ENCODE measurements at regions of chr2 and their contacts with region 1.

Region 1: DNA sequence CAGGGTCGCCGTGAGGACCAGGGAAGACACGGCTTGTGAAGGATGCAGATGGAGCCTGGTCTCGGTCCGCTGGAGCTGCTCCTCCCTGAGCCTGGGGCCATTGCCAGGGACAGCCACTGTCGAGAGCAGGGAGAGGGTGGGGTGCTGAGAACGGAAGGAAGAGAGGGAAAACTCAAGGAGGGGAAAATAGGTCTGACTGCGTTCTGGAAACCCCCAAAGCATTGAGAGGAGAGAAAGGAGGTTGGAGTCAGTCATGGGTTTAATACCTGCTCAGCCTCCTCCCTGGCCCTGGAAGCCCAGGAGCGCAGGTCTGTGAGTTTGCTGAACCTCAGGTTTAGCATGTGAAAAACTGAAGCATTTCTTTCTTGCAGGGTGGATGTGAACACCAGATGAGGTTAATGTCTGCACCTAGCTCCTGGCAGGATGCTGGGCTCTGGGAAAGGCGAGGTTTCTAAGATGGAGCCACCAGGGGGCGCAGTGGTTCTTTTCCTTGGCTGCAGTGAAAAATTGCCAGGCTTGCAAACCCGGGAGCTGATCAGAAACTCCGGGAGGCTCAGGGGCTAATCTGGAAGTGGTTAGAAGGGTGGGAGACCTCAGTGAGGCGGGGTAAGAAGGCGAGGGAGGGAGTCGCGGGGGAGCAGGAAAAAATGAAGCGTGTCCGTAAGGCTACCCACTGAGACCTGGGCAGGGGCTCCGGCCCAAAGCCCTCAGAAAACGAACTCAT is 33.6 kb upstream of the RNF149 start:
- DNase-seq: peak; percentile 68
- H3K4me3 ChIP-seq: no peak overlapping the region
- H3K27ac ChIP-seq: no peak overlapping the region
- H3K4me1 ChIP-seq: peaks cover 9% of the 10 kb centered on the region
- H3K27me3 ChIP-seq: no peaks in the 10 kb centered on the region
- CTCF ChIP-seq: peak; percentile 75 to 87
- POLR2A ChIP-seq: no peak

Region 2: GRCh38 chr2:101308432-101309210 is 33.4 kb before region 1 on chr2 and contains the start of gene RNF149:
- CTCF ChIA-PET with region 1: interaction called, 23 read pairs
- POLR2A ChIA-PET with region 1: no interaction called
- dilution Hi-C with region 1: no loop called
- intact Hi-C with region 1: loop called (anchors 1 kb)
- DNase-seq: peak; percentile 94
- H3K4me3 ChIP-seq: peak within 1 kb of the TSS; percentile 68 to 84 (median 82)
- H3K27ac ChIP-seq: peak within 1 kb of the TSS; percentile 83
- H3K4me1 ChIP-seq: peaks cover 23% of the 10 kb centered on the region
- H3K27me3 ChIP-seq: no peaks in the 10 kb centered on the region
- CTCF ChIP-seq: no peak
- POLR2A ChIP-seq: peak; percentile 95
- total RNA-seq, gene RNF149: 57.6 and 66.6 TPM in 2 replicates

Region 3: DNA sequence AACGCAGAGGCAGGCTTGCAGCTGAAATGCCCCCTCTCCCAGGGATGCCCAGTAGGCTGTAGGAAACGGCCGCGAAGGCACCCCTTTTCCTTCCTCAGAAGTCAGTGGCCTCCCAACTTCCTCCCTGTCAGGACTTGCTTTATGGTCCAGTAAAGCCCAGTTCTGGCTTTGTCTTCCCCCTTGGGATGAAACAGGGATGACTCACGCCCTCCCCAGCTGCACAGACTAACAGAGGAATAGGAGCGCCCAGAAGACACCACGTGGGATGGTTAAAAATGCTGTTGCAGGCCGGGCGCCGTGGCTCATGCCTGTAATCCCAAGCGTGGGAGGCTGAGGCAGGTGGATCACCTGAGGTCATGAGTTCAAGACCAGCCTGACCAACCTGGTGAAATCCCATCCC is 38.3 kb after region 1 on chr2:
- CTCF ChIA-PET with region 1: interaction called, 41 read pairs
- POLR2A ChIA-PET with region 1: no interaction called
- dilution Hi-C with region 1: no loop called
- intact Hi-C with region 1: no loop called
- DNase-seq: peak; percentile 57
- H3K4me3 ChIP-seq: no peak overlapping the region
- H3K27ac ChIP-seq: no peak overlapping the region
- H3K4me1 ChIP-seq: peaks cover 8% of the 10 kb centered on the region
- H3K27me3 ChIP-seq: peaks cover 11 to 12% of the 10 kb centered on the region in 2 experiments
- CTCF ChIP-seq: no peak
- POLR2A ChIP-seq: no peak

Region 4: GRCh38 chr2:101410716-101411211 is 68.7 kb after region 1 on chr2:
- CTCF ChIA-PET with region 1: interaction called, 55 read pairs
- POLR2A ChIA-PET with region 1: no interaction called
- dilution Hi-C with region 1: no loop called
- intact Hi-C with region 1: no loop called
- DNase-seq: no peak
- H3K4me3 ChIP-seq: no peak overlapping the region
- H3K27ac ChIP-seq: no peak overlapping the region
- H3K4me1 ChIP-seq: no peaks in the 10 kb centered on the region
- H3K27me3 ChIP-seq: peaks cover 0 to 15% of the 10 kb centered on the region in 2 experiments
- CTCF ChIP-seq: no peak
- POLR2A ChIP-seq: no peak

Region 5: DNA sequence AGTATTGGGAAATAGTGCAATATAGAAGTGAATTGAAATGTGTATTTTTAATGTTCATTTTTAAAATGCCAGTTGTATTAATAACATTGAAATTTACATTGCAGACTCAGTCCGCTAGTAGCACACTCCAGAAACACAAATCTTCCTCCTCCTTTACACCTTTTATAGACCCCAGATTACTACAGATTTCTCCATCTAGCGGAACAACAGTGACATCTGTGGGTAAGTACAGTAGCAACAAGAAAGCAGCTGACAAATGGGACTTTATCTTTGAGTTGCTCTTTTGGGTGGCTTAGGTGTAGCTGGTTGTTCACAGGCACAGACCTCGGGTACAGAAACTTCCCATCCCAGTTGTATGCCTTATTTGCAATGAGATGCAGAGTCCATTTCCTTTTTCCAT is 531.5 kb after region 1 on chr2:
- CTCF ChIA-PET with region 1: interaction called, 12 read pairs
- POLR2A ChIA-PET with region 1: no interaction called
- dilution Hi-C with region 1: no loop called
- intact Hi-C with region 1: no loop called
- DNase-seq: no peak
- H3K4me3 ChIP-seq: no peak overlapping the region
- H3K27ac ChIP-seq: no peak overlapping the region
- H3K4me1 ChIP-seq: no peaks in the 10 kb centered on the region
- H3K27me3 ChIP-seq: no peaks in the 10 kb centered on the region
- CTCF ChIP-seq: no peak
- POLR2A ChIP-seq: no peak

Region 6: DNA sequence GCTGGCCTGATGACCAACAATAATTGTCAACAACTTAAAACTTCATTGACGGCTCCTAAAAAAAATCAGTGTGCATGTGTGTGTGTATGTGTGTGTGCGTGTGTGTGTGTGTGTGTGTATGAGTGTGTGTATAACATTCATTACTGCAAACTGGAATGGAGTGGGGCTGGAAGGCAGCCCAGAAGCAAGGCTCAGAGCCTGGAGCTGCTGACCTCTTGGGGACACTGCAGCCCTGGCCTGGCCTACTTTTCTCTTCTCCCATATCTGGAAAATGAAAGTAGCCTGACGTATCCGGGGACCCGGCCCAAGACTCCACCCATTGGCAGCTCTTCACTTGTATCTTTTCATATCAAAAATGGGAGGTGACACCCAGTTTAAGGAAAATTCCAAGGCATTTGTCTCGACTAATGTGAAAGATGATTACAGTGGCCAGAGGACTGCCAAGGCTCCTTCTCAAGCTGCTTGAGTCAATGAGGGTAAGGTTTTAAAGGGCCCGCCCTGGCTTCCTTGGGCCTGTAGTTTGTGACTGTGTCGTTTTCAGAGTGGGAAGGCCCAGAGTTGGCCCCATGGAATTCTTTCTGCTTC is 728.1 kb after region 1 on chr2:
- CTCF ChIA-PET with region 1: no interaction called
- POLR2A ChIA-PET with region 1: no interaction called
- dilution Hi-C with region 1: no loop called
- intact Hi-C with region 1: no loop called
- DNase-seq: no peak
- H3K4me3 ChIP-seq: no peak overlapping the region
- H3K27ac ChIP-seq: no peak overlapping the region
- H3K4me1 ChIP-seq: no peaks in the 10 kb centered on the region
- H3K27me3 ChIP-seq: no peaks in the 10 kb centered on the region
- CTCF ChIP-seq: no peak
- POLR2A ChIP-seq: no peak

Measured in endothelial cell of umbilical vein (primary cell).